Endothelial cell of umbilical vein (primary cell): ENCODE measurements at regions of chr16 and their contacts with region 1.

Region 1: DNA sequence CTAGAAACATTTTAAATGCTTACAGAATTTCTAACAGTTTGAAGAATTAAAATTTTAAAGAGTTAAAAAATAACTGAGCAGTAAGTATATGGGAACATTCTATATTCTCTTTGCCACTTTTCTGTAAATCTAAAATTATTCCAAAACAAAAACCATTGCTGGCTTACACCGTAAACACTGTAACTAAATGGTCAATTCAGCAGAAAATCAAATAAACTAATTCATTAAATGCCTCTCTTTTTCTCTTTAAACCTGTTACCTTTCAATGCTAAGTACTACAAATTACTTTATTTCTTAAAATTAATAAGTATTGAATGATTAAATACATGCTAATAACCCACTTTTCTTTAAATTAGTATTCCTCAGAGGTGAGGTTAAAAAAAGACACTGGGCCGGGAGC is 14.0 kb downstream of the TERB1 start:
- DNase-seq: no peak
- H3K4me3 ChIP-seq: no peak overlapping the region
- H3K27ac ChIP-seq: no peak overlapping the region
- H3K4me1 ChIP-seq: no peaks in the 10 kb centered on the region
- H3K27me3 ChIP-seq: no peaks in the 10 kb centered on the region
- CTCF ChIP-seq: no peak
- POLR2A ChIP-seq: no peak

Region 2: GRCh38 chr16:66774981-66775380 is 12.4 kb before region 1 on chr16:
- CTCF ChIA-PET with region 1: interaction called, 3 read pairs
- POLR2A ChIA-PET with region 1: no interaction called
- dilution Hi-C with region 1: no loop called
- intact Hi-C with region 1: loop called (anchors 1 kb)
- DNase-seq: peak; percentile 24
- H3K4me3 ChIP-seq: no peak overlapping the region
- H3K27ac ChIP-seq: no peak overlapping the region
- H3K4me1 ChIP-seq: peaks cover 2% of the 10 kb centered on the region
- H3K27me3 ChIP-seq: no peaks in the 10 kb centered on the region
- CTCF ChIP-seq: no peak
- POLR2A ChIP-seq: no peak

Region 3: DNA sequence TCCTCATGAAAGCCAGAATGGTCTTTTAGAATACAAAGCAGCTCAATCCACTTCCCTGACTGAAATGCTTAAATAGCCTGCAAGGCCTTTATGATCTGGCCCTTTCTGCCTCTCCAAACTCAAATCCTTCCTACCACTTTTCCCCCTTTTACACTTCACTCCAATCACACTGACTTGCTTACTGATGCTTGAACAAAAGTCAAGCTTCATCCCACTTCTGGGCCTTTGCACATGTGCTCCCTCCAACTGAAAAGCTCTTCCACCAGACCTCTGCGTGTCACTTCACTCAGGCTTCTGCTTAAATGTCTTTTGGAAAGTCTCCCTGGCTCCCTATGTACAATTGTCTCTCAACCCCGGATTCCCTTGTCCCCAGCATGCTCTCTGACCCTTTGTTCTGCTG is 27.3 kb after region 1 on chr16:
- CTCF ChIA-PET with region 1: no interaction called
- POLR2A ChIA-PET with region 1: no interaction called
- dilution Hi-C with region 1: no loop called
- intact Hi-C with region 1: no loop called
- DNase-seq: no peak
- H3K4me3 ChIP-seq: no peak overlapping the region
- H3K27ac ChIP-seq: no peak overlapping the region
- H3K4me1 ChIP-seq: no peaks in the 10 kb centered on the region
- H3K27me3 ChIP-seq: no peaks in the 10 kb centered on the region
- CTCF ChIP-seq: no peak
- POLR2A ChIP-seq: no peak